ENCODE measurements at regions of chr7 and their contacts with region 1.

Region 1: DNA sequence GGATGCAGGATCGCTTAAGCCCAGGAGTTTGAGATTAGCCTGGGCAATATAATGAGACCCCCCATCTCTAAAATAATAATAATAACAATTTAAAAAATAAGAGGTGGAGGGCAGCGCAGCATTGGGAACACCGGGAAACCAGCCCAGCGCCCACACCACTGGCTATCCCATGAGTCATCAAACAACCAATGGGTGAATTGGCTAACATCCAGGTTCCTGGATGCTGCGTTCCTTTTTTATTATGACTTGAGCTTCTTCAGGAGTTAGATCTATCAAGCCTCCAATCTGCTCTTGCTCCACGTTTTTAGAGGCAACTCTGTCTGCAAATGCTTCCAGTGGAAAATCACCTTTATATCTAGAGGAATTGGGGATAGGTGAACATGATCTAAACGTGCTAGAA is 10.0 kb upstream of the LRRC4 start:
- DNase-seq: no peak
- ATAC-seq: no peak
- H3K4me3 ChIP-seq: no peak overlapping the region
- H3K27ac ChIP-seq: no peak overlapping the region
- H3K4me1 ChIP-seq: peaks cover 0 to 15% (median 0%) of the 10 kb centered on the region in 9 donors
- H3K27me3 ChIP-seq: no peaks in the 10 kb centered on the region
- CTCF ChIP-seq: no peak

Region 2: DNA sequence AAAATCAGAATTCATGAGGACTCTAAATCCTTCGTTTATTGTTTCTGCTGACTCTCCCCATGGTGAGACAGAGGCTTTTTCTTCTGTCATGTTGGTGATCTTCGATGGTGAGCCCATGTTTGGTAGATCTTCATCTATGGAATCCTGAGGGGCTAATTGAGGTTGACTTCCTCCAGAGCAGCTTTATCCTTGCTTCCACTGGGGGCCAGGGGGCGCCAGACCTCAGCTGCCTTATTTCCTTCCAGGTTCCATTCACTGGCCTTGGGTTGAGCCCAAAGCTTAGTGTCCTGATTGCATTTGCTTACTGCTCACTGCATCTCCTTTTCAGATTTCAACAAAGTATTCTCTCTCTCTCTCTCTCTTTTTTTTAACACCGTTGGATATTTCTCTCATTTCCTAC is 536.5 kb before region 1 on chr7:
- intact Hi-C with region 1: no loop called
- DNase-seq: peak in 1 of 2 donors; percentile 16
- ATAC-seq: no peak
- H3K4me3 ChIP-seq: no peak overlapping the region
- H3K27ac ChIP-seq: no peak overlapping the region
- H3K4me1 ChIP-seq: no peaks in the 10 kb centered on the region
- H3K27me3 ChIP-seq: peaks cover 0 to 29% (median 11%) of the 10 kb centered on the region in 7 donors
- CTCF ChIP-seq: peak in 7 of 9 donors; percentile 8 to 44 (median 34)

Region 3: DNA sequence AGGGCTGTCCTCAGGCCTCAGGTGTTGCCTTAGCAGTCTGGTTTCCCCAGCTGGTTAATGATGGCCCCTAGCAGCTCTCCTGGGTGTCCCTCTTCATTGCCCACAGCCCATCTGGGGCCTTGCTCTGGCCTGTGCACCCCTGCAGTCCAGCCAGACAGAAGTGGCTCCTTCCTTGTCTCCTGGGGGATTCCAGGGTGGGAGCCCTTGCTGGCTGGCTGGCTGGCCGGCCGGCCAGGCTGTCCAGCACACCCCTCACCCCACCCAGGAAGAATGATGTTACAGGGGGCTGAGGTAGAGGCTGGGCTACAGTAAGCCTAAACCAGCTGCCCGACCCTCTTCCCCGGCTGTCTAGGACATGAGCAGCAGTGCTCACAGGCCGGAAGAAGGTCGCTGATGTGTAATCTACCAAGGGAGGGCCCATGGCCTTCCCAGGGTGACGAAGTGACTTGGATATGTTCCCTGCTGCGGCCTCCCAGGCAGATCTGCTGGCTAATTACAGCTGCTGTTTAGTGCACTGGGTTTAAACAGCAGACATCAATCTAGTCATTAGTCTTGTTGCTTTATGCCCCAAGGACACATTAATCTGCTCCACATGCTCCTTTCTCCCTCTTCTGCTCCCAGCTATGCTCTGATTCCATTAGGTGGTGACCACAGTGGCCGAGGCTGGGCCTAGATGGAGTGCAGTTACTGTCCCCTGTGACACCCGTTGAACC is 43.8 kb after region 1 on chr7:
- intact Hi-C with region 1: loop called in 1 of 10 experiments (anchors 5 kb)
- DNase-seq: peak; percentile 50 to 58
- ATAC-seq: peak; percentile 59 to 87 (median 81)
- H3K4me3 ChIP-seq: no peak overlapping the region
- H3K27ac ChIP-seq: peak overlapping the region in 4 of 10 donors; percentile 4 to 45 (median 24)
- H3K4me1 ChIP-seq: peaks cover 0 to 35% (median 15%) of the 10 kb centered on the region in 9 donors
- H3K27me3 ChIP-seq: no peaks in the 10 kb centered on the region
- CTCF ChIP-seq: no peak